ENCODE measurements at regions of chr2 and their contacts with region 1.

Region 1: GRCh38 chr2:43266711-43267111 is 40.3 kb upstream of the ZFP36L2 start:
- DNase-seq: no peak
- H3K4me3 ChIP-seq: no peak overlapping the region
- H3K27ac ChIP-seq: no peak overlapping the region
- H3K4me1 ChIP-seq: peaks cover 0 to 12% (median 3%) of the 10 kb centered on the region in 4 experiments; a peak in 3 of 7 replicates
- H3K27me3 ChIP-seq: no peaks in the 10 kb centered on the region
- CTCF ChIP-seq: no peak
- EP300 ChIP-seq: no peak
- POLR2A ChIP-seq: no peak
- RAD21 ChIP-seq: no peak

Region 2: DNA sequence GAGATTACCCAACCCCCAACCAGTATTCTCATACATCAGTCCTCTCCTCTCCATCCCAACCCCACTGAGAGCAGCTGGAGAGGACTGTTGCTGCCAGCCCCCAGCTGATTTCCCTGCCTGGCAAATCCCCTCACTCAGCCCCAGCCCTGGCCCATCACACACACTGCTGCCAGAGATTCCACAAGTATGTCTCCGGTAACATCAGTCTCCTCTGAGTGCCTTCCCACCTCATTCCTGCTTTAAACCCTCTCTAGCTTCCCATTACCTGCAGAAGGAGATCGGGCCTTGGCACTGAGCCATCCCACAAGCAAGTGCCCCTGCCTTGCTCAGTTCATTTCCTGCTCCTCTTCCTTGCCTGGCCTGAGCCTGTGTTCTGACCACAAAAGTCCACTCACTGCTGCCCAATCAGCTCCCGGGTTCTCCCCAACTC is 10.3 kb after region 1 on chr2:
- CTCF ChIA-PET with region 1: interaction called, 10 read pairs
- POLR2A ChIA-PET with region 1: no interaction called
- DNase-seq: no peak
- H3K4me3 ChIP-seq: no peak overlapping the region
- H3K27ac ChIP-seq: no peak overlapping the region
- H3K4me1 ChIP-seq: peaks cover 0 to 3% (median 1%) of the 10 kb centered on the region in 4 experiments; a peak in 4 of 7 replicates
- H3K27me3 ChIP-seq: no peaks in the 10 kb centered on the region
- CTCF ChIP-seq: no peak
- EP300 ChIP-seq: no peak
- POLR2A ChIP-seq: no peak
- RAD21 ChIP-seq: no peak

Measured in H1 (cell line).